ENCODE measurements at regions of chr9 and their contacts with region 1.

Region 1: DNA sequence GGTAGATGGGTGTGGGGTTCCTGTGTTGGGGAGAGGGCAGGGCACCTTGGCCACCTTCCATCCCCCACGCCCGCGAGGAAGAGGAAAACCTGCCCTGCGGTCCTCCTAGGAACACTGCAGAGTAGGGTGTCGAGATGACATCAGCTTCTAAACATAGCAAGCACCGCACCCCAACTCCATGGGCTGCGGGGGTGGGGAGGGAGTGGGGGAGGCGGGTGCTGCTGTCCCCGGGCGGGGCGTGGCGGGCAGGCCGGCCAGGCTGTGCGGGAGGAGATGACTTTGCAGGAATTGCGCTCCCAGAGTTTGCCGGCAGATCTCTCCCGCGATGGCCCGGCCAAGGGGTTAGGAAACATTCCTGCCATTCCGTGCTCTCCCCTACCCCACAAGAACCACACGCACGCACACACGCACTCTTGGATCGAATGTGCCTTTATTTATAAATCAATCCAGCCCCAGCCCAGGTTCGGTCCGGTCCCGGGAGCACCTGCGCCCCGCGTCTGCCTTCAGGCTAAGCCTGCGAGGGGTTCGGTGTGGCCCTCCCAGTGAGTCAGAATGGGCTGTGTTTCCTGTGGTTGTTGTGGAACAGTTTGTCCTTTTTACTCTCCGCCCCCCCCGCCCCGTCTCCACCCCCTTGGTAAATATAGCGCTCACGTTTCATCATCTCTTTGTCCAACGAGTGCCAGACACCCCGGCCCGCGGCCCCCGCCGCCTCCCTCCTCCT is 5.2 kb upstream of the KLF9 start:
- DNase-seq: peak; percentile 90 to 95
- ATAC-seq: peak; percentile 60 to 66
- H3K4me3 ChIP-seq: peak overlapping the region; percentile 59
- H3K27ac ChIP-seq: peak overlapping the region; percentile 98 to 99
- H3K4me1 ChIP-seq: peaks cover 28% of the 10 kb centered on the region
- CTCF ChIP-seq: no peak; the same call in 2 of the 3 replicates
- EP300 ChIP-seq: peak; percentile 60 to 74; a peak in 4 of 5 replicates
- POLR2A ChIP-seq: peak; percentile 30; the same call in 1 of the 2 replicates
- RAD21 ChIP-seq: no peak

Region 2: GRCh38 chr9:70374962-70375618 is 44.6 kb before region 1 on chr9:
- CTCF ChIA-PET with region 1: no interaction called
- POLR2A ChIA-PET with region 1: no interaction called
- DNase-seq: no peak
- ATAC-seq: no peak
- H3K4me3 ChIP-seq: no peak overlapping the region
- H3K27ac ChIP-seq: no peak overlapping the region
- H3K4me1 ChIP-seq: no peaks in the 10 kb centered on the region
- CTCF ChIP-seq: no peak
- EP300 ChIP-seq: no peak
- POLR2A ChIP-seq: no peak
- RAD21 ChIP-seq: no peak

Region 3: GRCh38 chr9:70406434-70406862 is 13.3 kb before region 1 on chr9:
- CTCF ChIA-PET with region 1: interaction called, 5 read pairs
- POLR2A ChIA-PET with region 1: interaction called, 20 read pairs
- DNase-seq: no peak
- ATAC-seq: 0 out of 6 replicates have a peak, but pooled peaks of 1 of the 2 experiments have one; percentile 31
- H3K4me3 ChIP-seq: no peak overlapping the region
- H3K27ac ChIP-seq: no peak overlapping the region
- H3K4me1 ChIP-seq: no peaks in the 10 kb centered on the region
- CTCF ChIP-seq: no peak
- EP300 ChIP-seq: no peak
- POLR2A ChIP-seq: no peak
- RAD21 ChIP-seq: no peak

Region 4: DNA sequence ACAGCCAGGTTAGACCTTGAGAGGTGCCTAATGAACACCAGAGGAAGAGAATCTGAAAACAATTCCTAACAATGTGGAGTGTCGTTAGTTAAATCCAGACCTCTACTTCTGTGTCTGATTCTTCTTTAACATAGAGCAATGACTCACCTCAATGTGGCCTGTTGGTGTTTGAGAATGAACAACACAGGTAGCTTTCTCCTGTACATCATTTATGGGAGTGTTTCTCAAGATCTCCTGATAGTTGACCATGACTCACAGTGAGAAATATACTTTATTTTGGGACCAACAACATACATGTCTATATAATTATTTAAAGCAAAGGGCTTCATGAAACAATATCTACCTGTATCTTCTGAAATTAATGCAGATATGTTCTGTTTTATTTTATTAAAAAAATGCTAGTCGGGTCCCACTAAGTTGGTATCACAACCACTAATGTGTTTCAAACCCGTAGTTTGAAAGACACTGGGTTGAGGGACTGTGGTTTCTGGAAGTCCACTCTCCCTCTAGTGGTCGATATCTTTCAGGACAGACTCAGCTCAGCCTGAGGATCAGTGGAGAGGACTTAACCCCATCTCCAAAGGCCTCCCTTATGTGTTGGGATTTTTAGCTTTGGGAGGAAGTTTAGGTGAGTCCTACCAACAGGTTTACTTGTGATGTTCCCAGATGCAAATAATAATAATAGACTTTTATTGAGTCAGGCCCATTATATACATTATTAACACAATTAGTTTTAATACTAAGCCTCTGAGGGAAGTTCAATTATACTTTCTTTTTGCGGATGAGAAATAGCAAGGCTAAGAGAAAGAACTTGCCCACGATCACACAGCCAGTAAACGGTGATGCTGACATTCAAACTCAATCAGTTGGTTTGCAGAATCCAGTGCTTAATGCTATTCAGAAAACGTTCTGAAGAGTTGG is 64.8 kb after region 1 on chr9:
- CTCF ChIA-PET with region 1: interaction called, 25 read pairs
- POLR2A ChIA-PET with region 1: interaction called, 30 read pairs
- DNase-seq: peak; percentile 73 to 86
- ATAC-seq: peak; percentile 98 to 99
- H3K4me3 ChIP-seq: no peak overlapping the region
- H3K27ac ChIP-seq: peak overlapping the region in 1 of 2 experiments; percentile 44; a peak in 1 of 6 replicates
- H3K4me1 ChIP-seq: peaks cover 9% of the 10 kb centered on the region; the same call in 1 of the 3 replicates
- CTCF ChIP-seq: peak; percentile 72
- EP300 ChIP-seq: no peak
- POLR2A ChIP-seq: no peak
- RAD21 ChIP-seq: peak; percentile 74 to 76